HepG2 (cell line): ENCODE measurements at regions of chr10 and their contacts with region 1.

Region 1: DNA sequence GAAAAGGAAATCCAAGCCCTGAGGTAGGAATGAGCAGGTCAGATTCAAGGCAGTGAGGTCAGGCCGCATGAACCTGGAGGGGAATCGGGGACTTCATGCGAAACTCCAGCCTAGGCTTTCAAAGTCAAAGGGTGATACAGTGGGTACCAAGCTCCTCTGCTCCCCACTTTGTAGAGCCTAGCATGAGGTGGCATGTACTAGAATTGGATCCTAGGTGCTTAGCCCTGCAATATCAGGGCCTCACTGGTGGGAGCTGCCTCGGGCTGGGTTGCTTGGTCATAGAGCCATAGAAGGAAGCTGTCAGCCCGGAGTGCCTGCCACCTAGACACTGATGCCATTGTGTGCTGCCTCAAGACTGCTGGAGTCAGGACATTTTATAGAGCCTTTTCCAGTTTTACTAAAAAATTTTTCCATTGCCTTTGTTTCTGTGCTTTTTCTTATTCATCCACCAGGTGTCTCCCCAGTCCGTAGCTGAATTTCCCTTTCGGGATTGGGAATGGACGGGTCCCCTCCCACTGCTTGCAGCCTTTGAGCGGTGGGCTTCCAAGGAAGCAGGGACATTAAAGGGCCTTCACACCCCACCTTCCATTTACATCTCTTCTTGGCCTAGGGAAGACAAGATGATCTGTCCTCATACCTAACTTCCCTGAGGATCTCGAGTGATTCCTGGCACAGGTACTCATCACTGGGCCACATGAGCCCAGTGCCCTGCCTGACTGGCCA is 5.5 kb upstream of the LZTS2 start:
- DNase-seq: no peak
- ATAC-seq: no peak
- H3K4me3 ChIP-seq: no peak overlapping the region
- H3K27ac ChIP-seq: peak overlapping the region; percentile 20
- H3K4me1 ChIP-seq: peaks cover 31% of the 10 kb centered on the region
- H3K27me3 ChIP-seq: no peaks in the 10 kb centered on the region; a peak in 1 of 5 replicates
- CTCF ChIP-seq: peak; percentile 62
- EP300 ChIP-seq: no peak
- POLR2A ChIP-seq: no peak
- RAD21 ChIP-seq: peak; percentile 56; the same call in 1 of the 2 replicates

Region 2: GRCh38 chr10:101012525-101013364 is 18.6 kb after region 1 on chr10:
- CTCF ChIA-PET with region 1: interaction called, 240 read pairs
- POLR2A ChIA-PET with region 1: interaction called, 124 read pairs
- in situ Hi-C with region 1: no loop called
- intact Hi-C with region 1: loop called (anchors 1 kb)
- DNase-seq: peak; percentile 89
- ATAC-seq: peak; percentile 73
- H3K4me3 ChIP-seq: peak overlapping the region in 1 of 3 experiments; percentile 77; a peak in 2 of 6 replicates
- H3K27ac ChIP-seq: no peak overlapping the region
- H3K4me1 ChIP-seq: peaks cover 75% of the 10 kb centered on the region
- H3K27me3 ChIP-seq: no peaks in the 10 kb centered on the region
- CTCF ChIP-seq: peak; percentile 93
- EP300 ChIP-seq: no peak; a peak in 1 of 4 replicates
- POLR2A ChIP-seq: no peak
- RAD21 ChIP-seq: peak; percentile 77